Esophagus muscularis mucosa (tissue), 4 donors: ENCODE measurements at regions of chr7 and their contacts with region 1.

Region 1: GRCh38 chr7:76282344-76283253 is 19.9 kb upstream of the HSPB1 start:
- DNase-seq: no peak
- H3K4me3 ChIP-seq: peak overlapping the region; percentile 55 to 73 (median 59)
- H3K27ac ChIP-seq: peak overlapping the region in 1 of 4 donors; percentile 34
- H3K4me1 ChIP-seq: peaks cover 3 to 33% (median 31%) of the 10 kb centered on the region in 4 donors
- H3K27me3 ChIP-seq: peaks cover 0 to 47% (median 12%) of the 10 kb centered on the region in 4 donors
- CTCF ChIP-seq: no peak
- EP300 ChIP-seq: no peak
- POLR2A ChIP-seq: no peak

Region 2: DNA sequence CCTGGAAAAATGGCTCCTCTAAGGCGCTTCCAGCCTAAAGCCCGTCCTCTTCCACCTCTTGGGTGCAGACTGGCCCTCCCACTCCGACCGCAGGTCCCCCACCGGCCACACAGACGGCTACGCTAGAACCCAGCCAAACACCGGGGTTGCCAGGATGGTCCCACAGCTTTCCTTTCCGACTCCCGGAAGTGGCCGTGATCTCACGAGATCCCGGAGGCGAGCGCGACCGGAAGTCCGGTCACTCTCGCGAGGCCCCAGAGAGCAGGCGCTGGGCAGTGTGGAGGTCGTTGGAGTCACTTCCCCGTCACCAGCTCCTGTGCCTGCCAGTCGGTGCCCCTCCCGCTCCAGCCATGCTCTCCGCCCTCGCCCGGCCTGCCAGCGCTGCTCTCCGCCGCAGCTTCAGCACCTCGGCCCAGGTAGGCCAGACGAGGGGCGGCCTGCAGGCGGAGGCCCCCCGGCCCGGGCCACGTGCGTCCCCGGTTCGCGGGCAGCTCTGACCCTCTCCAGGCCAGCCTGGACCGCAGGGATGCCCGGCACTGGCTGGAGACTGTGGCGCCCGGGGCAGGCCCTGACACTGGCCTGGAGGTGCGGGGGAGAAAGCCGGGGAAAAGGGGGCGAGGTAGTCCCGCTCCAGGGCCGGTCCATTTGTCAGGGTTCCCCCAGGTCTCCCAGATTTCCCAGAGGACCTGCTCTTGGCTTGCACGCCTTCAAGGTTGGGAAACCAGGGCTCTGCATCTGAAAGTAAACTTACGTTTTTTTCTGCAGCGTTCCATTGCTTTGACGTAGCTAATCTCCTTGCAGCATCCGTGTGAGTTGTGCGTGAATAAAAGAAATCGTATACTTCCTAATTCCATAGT is 234.6 kb before region 1 on chr7 and contains the starts of genes MDH2 and STYXL1:
- intact Hi-C with region 1: no loop called
- DNase-seq: peak; percentile 98
- H3K4me3 ChIP-seq: peak within 1 kb of the TSS; percentile 83 to 100 (median 90)
- H3K27ac ChIP-seq: peak within 1 kb of the TSS; percentile 93 to 99 (median 98)
- H3K4me1 ChIP-seq: peaks cover 41 to 61% (median 50%) of the 10 kb centered on the region in 4 donors
- H3K27me3 ChIP-seq: no peaks in the 10 kb centered on the region
- CTCF ChIP-seq: peak in 1 of 3 experiments; percentile 29
- EP300 ChIP-seq: no peak
- POLR2A ChIP-seq: peak; percentile 80
- total RNA-seq, gene MDH2: 91.3 to 181 (median 105) TPM
- total RNA-seq, gene STYXL1: 13.9 to 20.0 (median 17.9) TPM

Region 3: DNA sequence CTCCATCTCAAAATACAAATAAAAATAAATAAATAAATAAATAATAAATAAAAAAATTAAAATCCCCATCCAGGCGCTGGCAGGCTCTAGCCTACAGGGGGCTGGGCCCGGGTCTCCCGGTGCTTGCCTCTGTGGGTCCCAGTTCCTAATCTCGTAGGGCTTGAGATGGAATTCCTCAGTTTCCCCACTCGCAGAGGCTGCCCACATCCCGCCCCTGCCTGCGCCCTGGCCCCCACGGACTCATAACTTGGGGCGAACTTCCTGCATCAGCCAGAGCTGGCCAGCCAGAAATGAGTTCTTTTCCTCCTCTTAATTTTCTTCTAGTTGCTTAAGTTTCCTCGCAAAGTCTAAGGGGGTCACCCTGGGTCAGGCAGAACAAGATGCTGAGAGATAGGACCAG is 102.9 kb before region 1 on chr7:
- intact Hi-C with region 1: loop called (anchors 10 kb)
- DNase-seq: no peak
- H3K4me3 ChIP-seq: no peak overlapping the region
- H3K27ac ChIP-seq: no peak overlapping the region
- H3K4me1 ChIP-seq: peaks cover 0 to 10% (median 7%) of the 10 kb centered on the region in 4 donors
- H3K27me3 ChIP-seq: no peaks in the 10 kb centered on the region
- CTCF ChIP-seq: no peak
- EP300 ChIP-seq: no peak
- POLR2A ChIP-seq: no peak

Region 4: DNA sequence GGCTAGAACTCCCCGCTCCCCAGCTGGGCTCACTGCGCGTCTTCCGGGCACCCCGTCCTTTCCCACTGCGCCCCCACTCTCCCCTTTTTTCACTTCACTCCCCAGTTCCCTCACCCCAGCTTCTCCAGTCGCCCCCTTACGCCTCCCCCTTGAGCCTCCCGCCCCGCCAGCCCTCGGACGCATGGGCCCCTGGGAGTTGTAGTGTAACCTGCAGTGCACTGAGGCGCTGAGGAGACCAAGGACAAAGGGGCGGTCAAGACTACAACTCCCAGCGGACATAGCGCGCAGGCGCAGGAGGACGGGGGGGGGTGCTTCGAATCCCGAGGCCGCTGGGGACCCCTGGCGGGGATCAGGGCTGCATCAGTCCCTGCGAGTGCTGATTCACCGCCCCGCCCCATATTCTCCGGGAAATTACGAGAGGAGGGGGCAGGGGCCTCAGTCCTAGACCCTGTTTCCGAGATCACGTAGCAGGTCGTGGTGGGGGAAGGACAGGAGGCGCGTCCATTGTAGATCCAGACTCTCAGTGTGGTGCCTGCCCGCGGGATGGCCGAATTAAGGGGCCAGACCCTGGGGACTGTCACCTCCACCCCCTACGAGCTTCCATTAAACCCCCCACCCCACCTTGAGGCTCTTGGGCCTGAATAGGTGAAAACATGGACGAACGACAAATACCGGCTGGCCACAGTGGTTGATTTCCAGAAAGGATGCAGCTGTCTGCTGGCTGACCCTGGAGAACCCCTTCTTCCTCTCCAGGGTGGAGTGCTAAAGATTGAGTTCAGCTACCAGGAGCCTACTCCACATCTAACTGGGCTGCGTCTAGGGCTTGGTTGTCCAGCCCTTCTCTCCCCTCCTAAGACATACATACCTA is 76.7 kb after region 1 on chr7:
- intact Hi-C with region 1: loop called (anchors 10 kb)
- DNase-seq: peak; percentile 99
- H3K4me3 ChIP-seq: peak overlapping the region; percentile 88 to 99 (median 94)
- H3K27ac ChIP-seq: peak overlapping the region; percentile 99 to 100 (median 100)
- H3K4me1 ChIP-seq: peaks cover 32 to 56% (median 50%) of the 10 kb centered on the region in 4 donors
- H3K27me3 ChIP-seq: no peaks in the 10 kb centered on the region
- CTCF ChIP-seq: peak; percentile 58 to 83 (median 76)
- EP300 ChIP-seq: peak; percentile 66
- POLR2A ChIP-seq: peak; percentile 9